ENCODE measurements at regions of chr14 and their contacts with region 1.

Region 1: GRCh38 chr14:87745507-87746118 is 247.4 kb downstream of the GALC start:
- DNase-seq: peak; percentile 66
- H3K4me3 Mint-ChIP-seq: no peak overlapping the region
- H3K27ac Mint-ChIP-seq: no peak overlapping the region
- H3K4me1 Mint-ChIP-seq: no peaks in the 10 kb centered on the region
- H3K27me3 Mint-ChIP-seq: no peaks in the 10 kb centered on the region
- CTCF ChIP-seq: peak; percentile 61

Region 2: GRCh38 chr14:87732562-87732961 is 13.1 kb before region 1 on chr14:
- CTCF ChIA-PET with region 1: interaction called, 21 read pairs
- POLR2A ChIA-PET with region 1: no interaction called
- intact Hi-C with region 1: no loop called
- DNase-seq: no peak
- H3K4me3 Mint-ChIP-seq: no peak overlapping the region
- H3K27ac Mint-ChIP-seq: no peak overlapping the region
- H3K4me1 Mint-ChIP-seq: no peaks in the 10 kb centered on the region
- H3K27me3 Mint-ChIP-seq: no peaks in the 10 kb centered on the region
- CTCF ChIP-seq: no peak

Region 3: DNA sequence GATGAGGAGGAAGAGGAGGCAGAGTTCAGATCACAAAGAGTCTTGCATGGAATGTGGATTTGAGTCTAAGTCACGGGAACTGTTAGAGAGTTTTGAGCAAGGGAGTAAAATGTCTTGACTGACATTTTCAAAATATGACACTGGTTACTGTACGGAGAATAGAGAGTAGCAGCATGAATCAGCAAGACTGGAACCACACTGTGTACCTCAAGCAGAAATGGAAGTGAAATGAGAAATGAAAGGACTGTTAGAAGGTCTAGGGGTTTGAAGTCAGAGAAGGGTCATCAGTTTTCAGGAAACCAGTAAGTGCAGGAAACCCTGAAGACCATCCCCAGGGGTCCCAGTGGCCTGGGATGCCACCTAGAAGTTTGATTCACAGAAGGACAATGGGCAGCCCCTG is 11.0 kb after region 1 on chr14:
- CTCF ChIA-PET with region 1: interaction called, 12 read pairs
- POLR2A ChIA-PET with region 1: no interaction called
- intact Hi-C with region 1: no loop called
- DNase-seq: no peak
- H3K4me3 Mint-ChIP-seq: no peak overlapping the region
- H3K27ac Mint-ChIP-seq: no peak overlapping the region
- H3K4me1 Mint-ChIP-seq: no peaks in the 10 kb centered on the region
- H3K27me3 Mint-ChIP-seq: no peaks in the 10 kb centered on the region
- CTCF ChIP-seq: no peak

Region 4: DNA sequence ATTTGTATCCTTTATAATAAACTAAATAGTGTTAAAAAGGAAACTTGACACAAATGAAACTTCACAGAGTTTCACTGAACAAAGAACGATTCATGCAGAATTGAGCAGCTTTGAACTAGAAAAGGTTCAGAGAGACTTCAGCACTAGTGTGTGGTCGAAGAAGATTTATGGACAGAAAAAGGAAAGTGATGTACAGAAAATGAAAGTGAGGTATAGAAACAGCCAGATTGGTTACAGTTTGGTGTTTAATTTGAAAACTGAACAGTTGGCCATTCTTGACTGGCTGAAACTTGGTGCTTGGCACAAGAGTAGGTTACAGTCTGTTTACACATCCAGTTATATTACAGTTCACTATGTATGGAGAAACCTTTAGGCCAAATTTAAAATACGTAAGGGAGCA is 40.3 kb after region 1 on chr14:
- CTCF ChIA-PET with region 1: interaction called, 14 read pairs
- POLR2A ChIA-PET with region 1: no interaction called
- intact Hi-C with region 1: no loop called
- DNase-seq: no peak
- H3K4me3 Mint-ChIP-seq: no peak overlapping the region
- H3K27ac Mint-ChIP-seq: no peak overlapping the region
- H3K4me1 Mint-ChIP-seq: peaks cover 11% of the 10 kb centered on the region
- H3K27me3 Mint-ChIP-seq: no peaks in the 10 kb centered on the region
- CTCF ChIP-seq: no peak

Region 5: DNA sequence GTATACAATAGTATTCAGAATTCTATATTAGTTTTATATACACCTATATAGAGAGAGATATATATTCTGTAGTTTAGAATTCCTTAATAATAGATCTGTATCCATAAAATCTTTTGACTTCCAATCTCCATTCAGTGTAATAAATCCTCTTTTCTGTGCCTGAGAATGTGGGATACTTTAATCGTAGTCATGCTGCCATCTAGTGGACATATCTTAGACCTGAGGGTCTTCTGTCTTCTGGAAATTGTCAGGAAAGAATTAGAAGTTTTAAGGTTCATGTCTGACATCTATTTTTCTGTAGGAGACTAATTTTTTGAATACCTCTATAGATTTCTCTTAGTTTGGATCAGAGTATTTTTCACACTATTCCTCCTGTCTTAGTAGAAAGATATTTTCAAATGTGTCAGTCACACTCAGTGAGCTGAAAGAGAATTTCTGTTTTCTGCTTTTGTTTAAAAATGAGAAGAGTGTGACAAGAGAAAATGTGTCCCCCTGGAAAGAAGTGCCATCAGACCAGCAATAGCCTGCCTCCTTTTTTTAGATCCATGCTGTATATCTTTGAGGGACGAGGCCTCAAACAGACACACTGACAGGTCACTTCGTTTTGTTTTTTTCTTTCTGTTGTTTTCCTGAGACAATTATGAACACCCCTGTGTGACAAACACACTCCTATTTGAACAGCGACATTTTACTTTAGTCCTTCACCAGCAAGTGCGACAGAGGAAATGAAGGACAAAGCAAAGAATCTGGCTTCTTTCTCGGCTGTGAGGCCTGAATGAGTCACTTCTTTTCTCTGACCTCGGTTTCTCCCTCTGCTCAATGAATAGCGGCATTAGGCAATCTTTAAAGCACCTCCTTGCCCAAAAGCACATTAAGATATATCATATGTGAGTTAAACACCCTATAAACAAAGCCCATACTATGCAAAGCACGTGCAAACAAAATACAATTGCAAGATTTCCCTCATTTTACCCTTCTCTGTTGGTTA is 151.1 kb after region 1 on chr14:
- CTCF ChIA-PET with region 1: interaction called, 105 read pairs
- POLR2A ChIA-PET with region 1: interaction called, 3 read pairs
- intact Hi-C with region 1: loop called (anchors 1 kb)
- DNase-seq: peak; percentile 73
- H3K4me3 Mint-ChIP-seq: no peak overlapping the region
- H3K27ac Mint-ChIP-seq: peak overlapping the region; percentile 32
- H3K4me1 Mint-ChIP-seq: peaks cover 8% of the 10 kb centered on the region
- H3K27me3 Mint-ChIP-seq: no peaks in the 10 kb centered on the region
- CTCF ChIP-seq: peak; percentile 62